Psoas muscle (tissue), 8 donors: ENCODE measurements at regions of chr20 and their contacts with region 1.

Region 1: DNA sequence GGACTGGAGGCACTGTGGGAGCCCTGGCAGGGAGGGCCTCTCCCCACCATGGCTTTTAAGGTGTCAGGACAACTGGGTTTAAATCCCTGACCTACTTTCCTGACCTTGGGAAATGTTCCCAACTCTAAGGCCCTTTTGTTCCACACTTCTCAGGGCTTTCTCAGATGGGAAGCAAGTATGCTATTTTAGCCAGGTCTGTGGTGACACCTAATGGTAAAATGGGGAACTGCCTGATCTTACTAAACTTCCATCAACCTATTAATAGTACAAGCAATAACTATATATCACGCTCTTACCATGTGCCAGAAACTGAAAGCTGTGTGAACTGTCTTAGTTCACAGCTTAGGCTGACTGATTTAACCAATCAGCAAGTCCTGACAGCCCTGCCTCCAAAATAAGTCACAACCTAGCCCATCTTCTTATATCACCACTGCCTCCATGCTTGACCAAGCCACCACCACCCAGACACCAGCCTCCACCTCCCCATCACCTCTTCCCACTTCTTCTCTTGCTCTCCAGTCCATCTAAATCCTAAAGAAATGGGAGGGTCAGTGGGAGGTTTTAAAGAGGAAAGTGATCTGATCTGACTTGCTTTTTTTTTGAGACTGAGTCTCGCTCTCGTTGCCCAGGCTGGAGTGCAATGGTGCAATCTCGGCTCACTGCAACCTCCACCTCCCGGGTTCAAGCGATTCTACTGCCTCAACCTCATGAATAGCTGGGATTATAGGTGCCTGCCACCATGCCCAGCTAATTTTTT is 6.9 kb upstream of the BLCAP start:
- DNase-seq: no peak
- ATAC-seq: peak; percentile 91 to 97 (median 94)
- H3K4me3 ChIP-seq: no peak overlapping the region
- H3K27ac ChIP-seq: no peak overlapping the region
- H3K4me1 ChIP-seq: peaks cover 3% of the 10 kb centered on the region
- H3K27me3 ChIP-seq: no peaks in the 10 kb centered on the region
- CTCF ChIP-seq: peak; percentile 92

Region 2: GRCh38 chr20:37192137-37192854 is 342.3 kb before region 1 on chr20:
- intact Hi-C with region 1: loop called in 1 of 2 experiments (anchors 2 kb)
- DNase-seq: peak; percentile 87 to 93
- ATAC-seq: peak; percentile 86 to 87 (median 86)
- H3K4me3 ChIP-seq: peak overlapping the region; percentile 15
- H3K27ac ChIP-seq: no peak overlapping the region
- H3K4me1 ChIP-seq: peaks cover 51% of the 10 kb centered on the region
- H3K27me3 ChIP-seq: no peaks in the 10 kb centered on the region
- CTCF ChIP-seq: peak; percentile 92

Region 3: GRCh38 chr20:37198932-37199660 is 335.5 kb before region 1 on chr20:
- intact Hi-C with region 1: loop called (anchors 2 kb)
- DNase-seq: peak; percentile 33 to 54
- ATAC-seq: peak; percentile 72 to 89 (median 84)
- H3K4me3 ChIP-seq: no peak overlapping the region
- H3K27ac ChIP-seq: peak overlapping the region; percentile 53
- H3K4me1 ChIP-seq: peaks cover 48% of the 10 kb centered on the region
- H3K27me3 ChIP-seq: no peaks in the 10 kb centered on the region
- CTCF ChIP-seq: no peak

Region 4: GRCh38 chr20:37265152-37265551 is 269.4 kb before region 1 on chr20:
- intact Hi-C with region 1: loop called (anchors 2 to 5 kb)
- DNase-seq: no peak
- ATAC-seq: no peak
- H3K4me3 ChIP-seq: no peak overlapping the region
- H3K27ac ChIP-seq: no peak overlapping the region
- H3K4me1 ChIP-seq: no peaks in the 10 kb centered on the region
- H3K27me3 ChIP-seq: no peaks in the 10 kb centered on the region
- CTCF ChIP-seq: no peak